ENCODE measurements at regions of chr9 and their contacts with region 1.

Region 1: GRCh38 chr9:133335878-133336811 is at the start of gene SURF6:
- DNase-seq: peak; percentile 85 to 97 (median 91)
- ATAC-seq: peak; percentile 93
- H3K4me3 ChIP-seq: peak within 1 kb of the TSS; percentile 86
- H3K4me3 Mint-ChIP-seq: peak within 1 kb of the TSS; percentile 97
- H3K27ac ChIP-seq: peak within 1 kb of the TSS; percentile 64 to 77
- H3K27ac Mint-ChIP-seq: peak within 1 kb of the TSS; percentile 91
- H3K4me1 ChIP-seq: peaks cover 54% of the 10 kb centered on the region
- H3K4me1 Mint-ChIP-seq: peaks cover 32% of the 10 kb centered on the region
- H3K27me3 ChIP-seq: no peaks in the 10 kb centered on the region
- H3K27me3 Mint-ChIP-seq: no peaks in the 10 kb centered on the region
- CTCF ChIP-seq: no peak
- total RNA-seq, gene SURF6: 15.1 to 15.9 TPM

Region 2: GRCh38 chr9:132744881-132745755 is 591.0 kb before region 1 on chr9:
- CTCF ChIA-PET with region 1: no interaction called
- POLR2A ChIA-PET with region 1: no interaction called
- intact Hi-C with region 1: no loop called
- DNase-seq: no peak
- ATAC-seq: no peak
- H3K4me3 ChIP-seq: no peak overlapping the region
- H3K4me3 Mint-ChIP-seq: no peak overlapping the region
- H3K27ac ChIP-seq: no peak overlapping the region
- H3K27ac Mint-ChIP-seq: no peak overlapping the region
- H3K4me1 ChIP-seq: no peaks in the 10 kb centered on the region
- H3K4me1 Mint-ChIP-seq: no peaks in the 10 kb centered on the region
- H3K27me3 ChIP-seq: peaks cover 45 to 50% of the 10 kb centered on the region in 2 experiments
- H3K27me3 Mint-ChIP-seq: peaks cover 64% of the 10 kb centered on the region
- CTCF ChIP-seq: no peak

Region 3: DNA sequence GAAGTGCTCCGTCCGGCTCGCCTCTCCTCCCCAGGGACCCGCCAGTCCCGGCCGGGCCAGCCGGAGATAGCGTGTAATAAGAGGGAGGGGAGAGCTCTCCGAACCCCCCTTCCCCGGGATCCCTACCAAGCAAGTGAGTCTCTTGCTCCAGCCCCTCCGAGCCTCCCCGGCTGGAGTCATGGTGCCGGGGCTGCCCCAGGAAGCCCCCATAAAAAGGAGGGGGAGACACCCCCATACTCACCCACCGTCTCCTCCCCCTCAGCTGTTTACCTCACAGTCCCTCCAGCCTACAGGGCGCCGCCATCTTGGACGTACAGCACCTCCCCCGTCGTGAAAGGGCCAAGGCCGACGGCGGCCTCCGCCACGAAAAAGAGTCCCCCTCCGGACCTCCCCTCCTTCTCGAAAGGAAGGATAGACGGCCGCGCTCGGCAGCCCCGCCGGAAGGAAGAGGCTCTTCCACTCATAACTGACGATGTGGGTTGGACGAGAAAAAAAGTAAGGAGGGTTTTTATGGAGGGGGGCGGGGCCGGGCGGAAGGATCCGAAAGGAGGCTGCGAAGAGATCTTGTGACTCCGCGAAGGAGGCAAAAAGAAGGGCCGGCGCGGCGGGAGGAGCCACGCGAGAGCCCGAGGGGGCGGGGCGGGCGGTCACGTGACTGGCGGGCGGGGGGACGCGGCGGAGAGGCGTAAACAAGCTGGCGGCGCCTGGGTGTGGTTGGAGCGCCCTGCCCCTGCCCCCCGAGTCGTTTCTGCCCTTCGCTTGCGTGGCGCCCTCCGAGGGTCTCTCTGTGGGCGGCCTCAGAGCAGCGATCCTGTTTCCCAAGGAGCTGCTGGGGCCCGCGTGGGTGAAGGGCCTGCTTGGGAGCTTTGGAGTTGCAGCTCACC is 391.6 kb before region 1 on chr9 and contains the start of gene TSC1:
- CTCF ChIA-PET with region 1: no interaction called
- POLR2A ChIA-PET with region 1: no interaction called
- intact Hi-C with region 1: loop called in 1 of 2 experiments (anchors 5 kb)
- DNase-seq: peak; percentile 96 to 99 (median 98)
- ATAC-seq: peak; percentile 87
- H3K4me3 ChIP-seq: peak within 1 kb of the TSS; percentile 96
- H3K4me3 Mint-ChIP-seq: peak within 1 kb of the TSS; percentile 91
- H3K27ac ChIP-seq: peak within 1 kb of the TSS; percentile 98 to 99
- H3K27ac Mint-ChIP-seq: peak within 1 kb of the TSS; percentile 97
- H3K4me1 ChIP-seq: peaks cover 24% of the 10 kb centered on the region
- H3K4me1 Mint-ChIP-seq: peaks cover 23% of the 10 kb centered on the region
- H3K27me3 ChIP-seq: no peaks in the 10 kb centered on the region
- H3K27me3 Mint-ChIP-seq: no peaks in the 10 kb centered on the region
- CTCF ChIP-seq: no peak
- total RNA-seq, gene TSC1: 50.0 to 51.9 TPM

Region 4: DNA sequence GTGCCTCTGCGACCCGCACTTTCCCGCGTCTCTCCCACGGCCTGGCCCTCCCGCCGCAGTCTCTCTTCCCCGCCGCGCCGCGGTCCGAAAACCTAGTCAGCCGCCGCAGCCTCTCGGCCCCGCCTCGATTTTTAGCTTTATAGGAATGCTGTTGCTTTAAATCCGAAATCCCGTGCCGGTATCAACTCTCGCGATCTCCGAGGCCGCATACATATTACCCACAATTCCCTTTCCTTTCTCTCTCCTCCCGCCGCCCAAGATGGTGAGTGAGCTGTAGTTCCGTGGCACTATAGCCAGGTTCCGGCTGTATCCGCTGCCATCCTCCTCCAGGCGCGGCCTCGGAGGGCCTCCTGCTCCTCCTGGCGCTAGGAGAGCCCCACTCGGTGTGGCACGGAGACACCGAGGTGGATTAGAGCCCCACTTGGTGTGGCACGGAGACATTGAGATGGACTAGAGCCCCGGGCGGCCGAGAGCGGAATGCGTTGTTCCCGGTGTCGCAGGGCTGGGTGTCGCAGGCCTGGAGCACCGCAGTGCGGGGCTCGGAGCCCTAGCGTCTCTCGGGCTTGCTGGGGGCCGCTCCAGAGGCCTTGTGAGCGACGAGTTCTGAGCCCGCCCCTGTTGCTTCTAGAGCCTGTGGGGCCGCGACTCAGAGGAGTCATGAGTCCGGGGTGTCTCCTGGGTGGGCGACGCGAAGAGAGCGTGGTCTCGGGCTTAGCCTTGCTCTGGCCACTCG is 12.0 kb after region 1 on chr9 and contains the starts of genes MED22 and RPL7A:
- CTCF ChIA-PET with region 1: no interaction called
- POLR2A ChIA-PET with region 1: interaction called, 19 read pairs
- intact Hi-C with region 1: loop called (anchors 1 kb)
- DNase-seq: peak; percentile 83 to 97 (median 88)
- ATAC-seq: peak; percentile 90
- H3K4me3 ChIP-seq: peak within 1 kb of the TSS; percentile 88
- H3K4me3 Mint-ChIP-seq: peak within 1 kb of the TSS; percentile 96
- H3K27ac ChIP-seq: peak within 1 kb of the TSS; percentile 84 to 91
- H3K27ac Mint-ChIP-seq: peak within 1 kb of the TSS; percentile 85
- H3K4me1 ChIP-seq: peaks cover 50% of the 10 kb centered on the region
- H3K4me1 Mint-ChIP-seq: peaks cover 39% of the 10 kb centered on the region
- H3K27me3 ChIP-seq: no peaks in the 10 kb centered on the region
- H3K27me3 Mint-ChIP-seq: no peaks in the 10 kb centered on the region
- CTCF ChIP-seq: no peak
- total RNA-seq, gene MED22: 15.7 to 18.0 TPM
- total RNA-seq, gene RPL7A: 2,613 to 2,686 TPM

Region 5: GRCh38 chr9:133375724-133376654 is 39.8 kb after region 1 on chr9 and contains the starts of genes STKLD1 and SURF4:
- CTCF ChIA-PET with region 1: no interaction called
- POLR2A ChIA-PET with region 1: interaction called, 16 read pairs
- intact Hi-C with region 1: loop called (anchors 1 to 2 kb)
- DNase-seq: peak; percentile 84 to 97 (median 94)
- ATAC-seq: peak; percentile 74
- H3K4me3 ChIP-seq: peak within 1 kb of the TSS; percentile 73
- H3K4me3 Mint-ChIP-seq: peak within 1 kb of the TSS; percentile 96
- H3K27ac ChIP-seq: peak within 1 kb of the TSS; percentile 81 to 84
- H3K27ac Mint-ChIP-seq: peak within 1 kb of the TSS; percentile 98
- H3K4me1 ChIP-seq: peaks cover 53% of the 10 kb centered on the region
- H3K4me1 Mint-ChIP-seq: peaks cover 40% of the 10 kb centered on the region
- H3K27me3 ChIP-seq: no peaks in the 10 kb centered on the region
- H3K27me3 Mint-ChIP-seq: no peaks in the 10 kb centered on the region
- CTCF ChIP-seq: no peak
- total RNA-seq, gene STKLD1: 0.59 to 1.0 TPM
- total RNA-seq, gene SURF4: 90.7 to 94.6 TPM

Region 6: GRCh38 chr9:133396952-133397351 is 60.8 kb after region 1 on chr9:
- CTCF ChIA-PET with region 1: no interaction called
- POLR2A ChIA-PET with region 1: no interaction called
- intact Hi-C with region 1: no loop called
- DNase-seq: no peak
- ATAC-seq: no peak
- H3K4me3 ChIP-seq: no peak overlapping the region
- H3K4me3 Mint-ChIP-seq: no peak overlapping the region
- H3K27ac ChIP-seq: no peak overlapping the region
- H3K27ac Mint-ChIP-seq: no peak overlapping the region
- H3K4me1 ChIP-seq: no peaks in the 10 kb centered on the region
- H3K4me1 Mint-ChIP-seq: no peaks in the 10 kb centered on the region
- H3K27me3 ChIP-seq: no peaks in the 10 kb centered on the region
- H3K27me3 Mint-ChIP-seq: no peaks in the 10 kb centered on the region
- CTCF ChIP-seq: no peak

Region 7: DNA sequence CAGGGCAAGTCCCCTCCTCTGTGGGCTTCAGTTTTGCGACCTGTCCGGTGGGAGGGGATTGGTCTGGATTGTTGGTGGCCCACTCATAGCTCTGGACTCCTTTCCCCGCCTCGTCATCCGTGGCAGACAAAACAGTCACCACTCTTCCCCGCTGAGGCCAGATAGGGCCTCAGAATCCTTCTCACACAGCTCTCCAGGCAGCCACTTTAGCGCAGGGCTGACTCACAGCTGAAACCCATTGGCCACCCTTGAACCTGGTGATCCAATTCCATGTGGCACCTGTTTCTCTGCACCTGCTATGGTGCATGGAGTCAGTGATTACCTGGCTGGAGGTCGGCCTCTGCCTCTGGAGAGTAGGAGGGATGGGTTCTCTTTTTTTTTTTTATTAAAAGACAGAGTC is 107.8 kb after region 1 on chr9:
- CTCF ChIA-PET with region 1: no interaction called
- POLR2A ChIA-PET with region 1: no interaction called
- intact Hi-C with region 1: no loop called
- DNase-seq: no peak
- ATAC-seq: no peak
- H3K4me3 ChIP-seq: no peak overlapping the region
- H3K4me3 Mint-ChIP-seq: no peak overlapping the region
- H3K27ac ChIP-seq: no peak overlapping the region
- H3K27ac Mint-ChIP-seq: no peak overlapping the region
- H3K4me1 ChIP-seq: no peaks in the 10 kb centered on the region
- H3K4me1 Mint-ChIP-seq: no peaks in the 10 kb centered on the region
- H3K27me3 ChIP-seq: no peaks in the 10 kb centered on the region
- H3K27me3 Mint-ChIP-seq: peaks cover 5% of the 10 kb centered on the region
- CTCF ChIP-seq: no peak

Region 8: DNA sequence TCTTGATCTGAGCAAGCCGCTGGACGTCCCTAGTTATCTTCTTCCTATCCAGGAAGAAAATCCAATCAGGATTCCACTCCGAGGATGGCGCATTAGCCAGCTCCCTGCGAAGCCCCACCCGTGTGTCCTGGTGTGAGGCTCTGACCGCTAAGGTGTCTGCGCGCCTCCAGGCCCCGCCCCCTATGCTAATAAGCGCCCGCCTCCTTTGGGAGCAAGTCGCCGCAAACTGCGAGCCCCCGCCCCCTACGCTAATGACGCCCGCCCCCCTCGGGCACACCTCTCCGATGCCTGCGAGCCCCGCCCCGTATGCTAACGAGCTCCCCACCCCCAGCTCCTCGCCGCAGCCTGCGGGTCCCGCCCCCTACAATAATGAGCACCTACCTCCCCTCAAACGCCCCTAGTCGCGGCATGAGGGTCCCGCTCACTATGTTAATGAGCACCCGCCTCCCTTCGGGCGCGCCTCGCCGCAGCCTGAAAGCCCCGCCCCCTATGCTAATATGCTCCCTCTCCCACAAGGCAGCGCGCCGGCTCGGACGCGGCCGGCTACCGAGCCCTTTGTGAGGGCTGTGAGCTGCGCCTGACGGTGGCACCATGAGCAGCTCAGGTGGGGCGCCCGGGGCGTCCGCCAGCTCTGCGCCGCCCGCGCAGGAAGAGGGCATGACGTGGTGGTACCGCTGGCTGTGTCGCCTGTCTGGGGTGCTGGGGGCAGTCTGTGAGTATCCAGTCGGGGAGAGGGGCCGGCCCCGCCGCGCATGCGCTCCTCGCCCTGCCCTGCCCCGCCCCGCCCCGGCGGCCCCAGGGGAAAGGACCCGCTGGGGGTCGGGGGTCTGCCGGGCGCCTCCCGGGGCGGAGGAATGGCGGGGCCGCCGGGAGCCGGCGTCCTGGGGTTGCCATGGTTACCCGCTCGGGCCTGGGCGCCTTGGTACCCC is 123.6 kb after region 1 on chr9 and contains the start of gene CACFD1:
- CTCF ChIA-PET with region 1: no interaction called
- POLR2A ChIA-PET with region 1: no interaction called
- intact Hi-C with region 1: loop called in 1 of 2 experiments (anchors 1 kb)
- DNase-seq: peak; percentile 83 to 97 (median 90)
- ATAC-seq: peak; percentile 80
- H3K4me3 ChIP-seq: peak within 1 kb of the TSS; percentile 69
- H3K4me3 Mint-ChIP-seq: peak within 1 kb of the TSS; percentile 95
- H3K27ac ChIP-seq: peak within 1 kb of the TSS; percentile 52 to 82
- H3K27ac Mint-ChIP-seq: peak within 1 kb of the TSS; percentile 97
- H3K4me1 ChIP-seq: peaks cover 18% of the 10 kb centered on the region
- H3K4me1 Mint-ChIP-seq: peaks cover 23% of the 10 kb centered on the region
- H3K27me3 ChIP-seq: no peaks in the 10 kb centered on the region
- H3K27me3 Mint-ChIP-seq: no peaks in the 10 kb centered on the region
- CTCF ChIP-seq: no peak
- total RNA-seq, gene CACFD1: 3.7 to 3.8 TPM

Measured in CD4-positive, alpha-beta T cell (primary cell).